Stomach (tissue), 19 donors: ENCODE measurements at regions of chr3 and their contacts with region 1.

Region 1: DNA sequence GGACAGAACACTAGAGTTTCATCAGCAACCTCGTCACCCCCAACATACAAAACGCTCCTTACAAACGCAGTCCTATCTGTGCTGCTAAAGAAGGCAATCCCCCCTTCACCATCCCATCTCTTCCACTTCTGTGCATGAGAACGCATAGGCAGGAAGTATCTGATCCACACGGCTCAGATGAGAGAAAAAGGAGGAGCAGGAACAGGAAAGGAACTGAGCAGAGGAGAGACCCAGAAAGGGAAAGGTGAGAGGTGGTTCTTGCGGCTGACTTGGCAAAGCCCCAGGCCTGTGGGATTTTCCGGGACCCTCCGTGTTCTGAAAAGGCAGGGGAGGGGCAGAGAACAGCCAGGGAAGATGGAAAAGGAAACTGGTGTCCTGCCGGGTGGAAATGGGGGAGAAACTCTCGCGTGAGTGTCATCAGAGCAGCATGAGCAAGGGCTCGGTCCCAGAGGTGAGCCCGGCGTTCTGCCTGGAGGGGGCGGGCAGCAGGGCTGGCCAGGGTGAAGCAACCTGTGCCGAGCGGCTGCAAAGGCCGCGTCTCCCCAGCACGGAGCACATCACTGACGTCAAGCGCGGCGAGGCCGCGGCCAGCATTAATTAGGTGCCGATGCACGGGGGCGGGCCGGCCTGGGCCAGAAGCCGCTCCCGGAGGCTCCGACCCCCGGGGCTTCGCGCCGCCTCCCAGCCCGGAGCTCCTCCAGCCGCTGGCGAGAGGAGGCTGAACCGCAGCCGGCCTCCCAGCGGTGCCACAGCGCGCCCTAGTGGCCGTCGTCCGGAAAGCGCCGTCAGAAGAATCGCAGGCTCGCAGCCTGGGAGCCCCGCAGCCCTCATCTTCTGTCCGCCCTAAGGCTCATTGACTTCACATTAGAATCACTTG is 35.8 kb downstream of the CPN2 start:
- DNase-seq: peak; percentile 86 to 96
- H3K4me3 ChIP-seq: peak overlapping the region; percentile 49 to 52 (median 50)
- H3K27ac ChIP-seq: peak overlapping the region in 4 of 5 donors; percentile 54 to 80 (median 68)
- H3K4me1 ChIP-seq: peaks cover 12 to 58% (median 44%) of the 10 kb centered on the region in 4 donors
- H3K27me3 ChIP-seq: peaks cover 0 to 15% (median 7%) of the 10 kb centered on the region in 3 donors
- CTCF ChIP-seq: peak in 5 of 7 experiments; percentile 83 to 93 (median 88)
- EP300 ChIP-seq: peak; percentile 54
- POLR2A ChIP-seq: no peak

Region 2: DNA sequence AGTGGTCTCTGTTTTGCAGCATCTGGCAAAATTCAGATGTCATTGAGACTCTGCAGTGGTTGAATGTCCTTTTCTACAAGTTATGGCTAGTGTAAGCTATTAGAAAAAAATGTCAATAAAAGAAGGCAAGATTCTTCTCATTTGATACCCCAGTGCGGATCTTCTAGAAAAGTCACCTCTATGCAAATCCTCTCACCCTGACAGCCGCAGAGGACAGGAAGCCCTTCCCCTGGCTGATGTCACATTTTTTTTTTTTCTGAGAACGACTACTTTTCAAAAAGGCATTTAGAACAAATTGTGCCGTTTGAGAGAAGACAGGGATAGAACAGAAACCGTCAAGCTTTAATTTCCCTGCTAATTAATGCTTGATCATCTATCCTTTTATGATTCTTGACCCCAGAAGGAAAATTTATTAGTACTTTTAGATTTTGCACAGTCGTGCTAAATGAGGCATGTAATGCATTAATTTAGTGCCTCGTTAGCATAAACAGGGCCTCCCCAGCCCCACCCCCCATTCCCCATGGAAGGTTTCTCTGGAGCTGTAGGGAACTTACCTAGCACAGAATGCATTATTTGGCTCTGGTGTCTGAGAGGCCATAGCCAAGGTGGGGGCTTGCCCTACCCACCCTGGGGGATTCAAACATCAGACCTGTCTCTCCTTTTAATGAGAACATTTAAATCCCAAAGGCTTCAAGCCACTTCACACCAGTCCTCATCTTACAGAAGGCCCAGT is 538.5 kb before region 1 on chr3:
- intact Hi-C with region 1: loop called (anchors 5 kb)
- DNase-seq: no peak
- H3K4me3 ChIP-seq: no peak overlapping the region
- H3K27ac ChIP-seq: no peak overlapping the region
- H3K4me1 ChIP-seq: peaks cover 0 to 15% (median 8%) of the 10 kb centered on the region in 4 donors
- H3K27me3 ChIP-seq: peaks cover 0 to 12% (median 3%) of the 10 kb centered on the region in 3 donors
- CTCF ChIP-seq: no peak
- EP300 ChIP-seq: no peak
- POLR2A ChIP-seq: no peak